Activated B cell treated with CpG ODN at 0.5 μM for 24 hours (primary cell): ENCODE measurements at regions of chr17 and their contacts with region 1.

Region 1: GRCh38 chr17:42067351-42068091 is 17.1 kb upstream of the C17orf113 start:
- DNase-seq: peak; percentile 66
- ATAC-seq: peak; percentile 70
- H3K4me3 Mint-ChIP-seq: no peak overlapping the region
- H3K27ac Mint-ChIP-seq: no peak overlapping the region
- H3K4me1 Mint-ChIP-seq: peaks cover 28% of the 10 kb centered on the region
- H3K27me3 Mint-ChIP-seq: peaks cover 8% of the 10 kb centered on the region
- CTCF ChIP-seq: no peak

Region 2: GRCh38 chr17:42009170-42009569 is 58.4 kb before region 1 on chr17:
- CTCF ChIA-PET with region 1: no interaction called
- POLR2A ChIA-PET with region 1: no interaction called
- intact Hi-C with region 1: no loop called
- DNase-seq: no peak
- ATAC-seq: no peak
- H3K4me3 Mint-ChIP-seq: no peak overlapping the region
- H3K27ac Mint-ChIP-seq: no peak overlapping the region
- H3K4me1 Mint-ChIP-seq: peaks cover 47% of the 10 kb centered on the region
- H3K27me3 Mint-ChIP-seq: no peaks in the 10 kb centered on the region
- CTCF ChIP-seq: no peak

Region 3: GRCh38 chr17:42027961-42028790 is 39.3 kb before region 1 on chr17:
- CTCF ChIA-PET with region 1: interaction called, 4 read pairs
- POLR2A ChIA-PET with region 1: interaction called, 3 read pairs
- intact Hi-C with region 1: loop called (anchors 1 kb)
- DNase-seq: no peak
- ATAC-seq: no peak
- H3K4me3 Mint-ChIP-seq: no peak overlapping the region
- H3K27ac Mint-ChIP-seq: no peak overlapping the region
- H3K4me1 Mint-ChIP-seq: peaks cover 18% of the 10 kb centered on the region
- H3K27me3 Mint-ChIP-seq: no peaks in the 10 kb centered on the region
- CTCF ChIP-seq: no peak

Region 4: GRCh38 chr17:42101513-42102319 is 34.2 kb after region 1 on chr17:
- CTCF ChIA-PET with region 1: interaction called, 11 read pairs
- POLR2A ChIA-PET with region 1: interaction called, 3 read pairs
- intact Hi-C with region 1: loop called (anchors 2 kb)
- DNase-seq: peak; percentile 67
- ATAC-seq: peak; percentile 60
- H3K4me3 Mint-ChIP-seq: no peak overlapping the region
- H3K27ac Mint-ChIP-seq: no peak overlapping the region
- H3K4me1 Mint-ChIP-seq: peaks cover 14% of the 10 kb centered on the region
- H3K27me3 Mint-ChIP-seq: no peaks in the 10 kb centered on the region
- CTCF ChIP-seq: no peak

Region 5: GRCh38 chr17:42120770-42121769 is 53.5 kb after region 1 on chr17 and contains the start of gene KAT2A:
- CTCF ChIA-PET with region 1: interaction called, 72 read pairs
- POLR2A ChIA-PET with region 1: interaction called, 7 read pairs
- intact Hi-C with region 1: loop called (anchors 1 kb)
- DNase-seq: peak; percentile 76
- ATAC-seq: peak; percentile 89
- H3K4me3 Mint-ChIP-seq: peak within 1 kb of the TSS; percentile 71
- H3K27ac Mint-ChIP-seq: peak within 1 kb of the TSS; percentile 30
- H3K4me1 Mint-ChIP-seq: peaks cover 32% of the 10 kb centered on the region
- H3K27me3 Mint-ChIP-seq: no peaks in the 10 kb centered on the region
- CTCF ChIP-seq: no peak
- total RNA-seq, gene KAT2A: 33.4 and 40.1 TPM in 2 replicates

Region 6: GRCh38 chr17:42548070-42548837 is 480.7 kb after region 1 on chr17:
- CTCF ChIA-PET with region 1: no interaction called
- POLR2A ChIA-PET with region 1: no interaction called
- intact Hi-C with region 1: no loop called
- DNase-seq: peak; percentile 81
- ATAC-seq: peak; percentile 97
- H3K4me3 Mint-ChIP-seq: peak overlapping the region; percentile 66
- H3K27ac Mint-ChIP-seq: no peak overlapping the region
- H3K4me1 Mint-ChIP-seq: peaks cover 17% of the 10 kb centered on the region
- H3K27me3 Mint-ChIP-seq: no peaks in the 10 kb centered on the region
- CTCF ChIP-seq: no peak